CD8-positive, alpha-beta T cell (primary cell): ENCODE measurements at regions of chr11 and their contacts with region 1.

Region 1: DNA sequence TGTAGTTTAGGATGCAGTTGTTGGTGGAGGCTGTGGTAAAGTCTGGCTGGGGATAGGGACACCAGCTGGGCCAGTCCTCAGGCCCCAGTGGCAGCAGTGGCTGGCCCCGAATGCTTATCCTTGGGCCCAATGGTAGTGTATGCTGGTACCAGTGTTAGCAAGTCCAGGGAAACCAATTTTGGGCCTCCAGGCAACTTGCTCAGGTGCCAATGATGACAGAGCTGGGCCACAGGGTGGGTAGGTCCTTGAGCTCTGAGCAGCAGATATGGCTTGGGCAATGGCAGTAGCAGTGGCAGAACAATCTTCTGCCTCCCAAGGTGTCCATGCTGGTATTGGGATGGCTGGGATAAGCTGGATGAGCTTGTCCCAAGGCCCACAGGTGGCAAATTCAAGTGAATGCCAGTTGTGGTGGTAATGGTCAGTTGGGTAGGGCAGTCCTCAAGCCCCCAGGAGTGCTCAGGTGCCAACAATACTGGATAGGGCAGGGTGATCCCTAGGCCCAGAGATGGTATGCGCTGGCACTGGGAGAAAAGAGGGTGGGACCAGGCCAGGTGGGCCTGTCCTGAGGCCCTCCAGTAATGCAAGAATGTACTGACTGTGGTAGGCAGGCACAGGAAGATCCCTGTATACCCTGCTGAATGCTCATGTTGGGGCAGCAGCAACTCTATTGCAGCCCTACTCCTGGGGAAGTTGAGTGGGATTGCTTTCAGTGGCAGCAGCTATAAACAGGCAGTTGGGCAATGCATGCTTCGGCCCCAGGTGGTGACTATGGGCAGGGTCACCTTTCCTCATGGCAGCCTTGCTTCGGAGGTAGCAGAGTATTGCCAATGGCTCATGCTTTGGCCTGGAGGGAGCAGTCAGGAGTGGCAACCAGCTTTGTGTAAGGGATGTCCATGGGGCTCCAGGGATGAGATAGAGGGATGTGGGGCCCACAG is 54.7 kb downstream of the KCNQ1OT1 start:
- DNase-seq: no peak
- ATAC-seq: no peak
- H3K4me3 ChIP-seq: no peak overlapping the region
- H3K4me3 Mint-ChIP-seq: no peak overlapping the region
- H3K27ac ChIP-seq: no peak overlapping the region
- H3K27ac Mint-ChIP-seq: no peak overlapping the region
- H3K4me1 ChIP-seq: no peaks in the 10 kb centered on the region
- H3K4me1 Mint-ChIP-seq: no peaks in the 10 kb centered on the region
- H3K27me3 ChIP-seq: no peaks in the 10 kb centered on the region
- H3K27me3 Mint-ChIP-seq: no peaks in the 10 kb centered on the region
- CTCF ChIP-seq: no peak

Region 2: DNA sequence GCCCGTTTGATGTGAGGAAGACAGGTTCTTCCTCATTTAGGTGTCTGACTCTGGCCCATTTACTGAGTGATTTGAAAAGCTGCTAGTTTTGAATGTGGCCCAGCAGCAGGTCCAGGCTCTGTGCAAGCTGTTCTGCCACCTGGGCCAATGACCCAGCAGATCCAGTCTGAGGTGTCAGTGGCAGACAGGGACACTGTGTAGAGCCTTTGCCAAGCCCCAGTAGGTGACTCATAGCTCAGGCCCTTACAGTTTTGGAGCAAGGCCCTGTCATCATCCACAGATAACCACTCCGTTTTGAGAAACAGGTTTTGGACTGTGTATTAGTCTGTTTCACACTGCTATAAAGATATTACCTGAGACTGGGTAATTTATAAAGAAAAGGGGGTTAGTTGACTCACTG is 319.4 kb before region 1 on chr11:
- CTCF ChIA-PET with region 1: no interaction called
- POLR2A ChIA-PET with region 1: no interaction called
- intact Hi-C with region 1: no loop called
- DNase-seq: no peak
- ATAC-seq: no peak
- H3K4me3 ChIP-seq: no peak overlapping the region
- H3K4me3 Mint-ChIP-seq: no peak overlapping the region
- H3K27ac ChIP-seq: no peak overlapping the region
- H3K27ac Mint-ChIP-seq: no peak overlapping the region
- H3K4me1 ChIP-seq: no peaks in the 10 kb centered on the region
- H3K4me1 Mint-ChIP-seq: peaks cover 11% of the 10 kb centered on the region
- H3K27me3 ChIP-seq: peaks cover 0 to 3% of the 10 kb centered on the region in 2 experiments
- H3K27me3 Mint-ChIP-seq: peaks cover 19% of the 10 kb centered on the region
- CTCF ChIP-seq: no peak

Region 3: DNA sequence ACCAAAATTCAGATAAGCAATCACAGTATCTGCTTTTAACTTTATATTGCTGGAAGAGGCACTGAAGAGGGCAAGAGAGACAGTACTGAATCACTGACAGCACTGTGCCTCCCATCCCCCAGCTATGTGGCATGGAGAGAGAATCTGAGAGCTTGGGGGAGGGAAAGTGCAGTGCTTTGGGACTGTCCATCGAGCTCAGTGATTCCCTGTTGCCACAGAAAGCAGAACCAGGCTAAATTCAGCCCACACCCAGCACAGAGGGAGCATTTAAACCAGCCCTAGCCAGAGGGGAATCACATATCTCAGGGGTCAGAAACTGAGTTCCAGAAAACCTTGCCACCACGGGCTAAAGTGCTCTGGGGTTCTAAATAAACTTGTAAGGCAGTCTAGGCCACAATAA is 156.0 kb before region 1 on chr11:
- CTCF ChIA-PET with region 1: no interaction called
- POLR2A ChIA-PET with region 1: no interaction called
- intact Hi-C with region 1: no loop called
- DNase-seq: no peak
- ATAC-seq: no peak
- H3K4me3 ChIP-seq: no peak overlapping the region
- H3K4me3 Mint-ChIP-seq: no peak overlapping the region
- H3K27ac ChIP-seq: no peak overlapping the region
- H3K27ac Mint-ChIP-seq: no peak overlapping the region
- H3K4me1 ChIP-seq: no peaks in the 10 kb centered on the region
- H3K4me1 Mint-ChIP-seq: no peaks in the 10 kb centered on the region
- H3K27me3 ChIP-seq: peaks cover 0 to 3% of the 10 kb centered on the region in 2 experiments
- H3K27me3 Mint-ChIP-seq: peaks cover 2% of the 10 kb centered on the region
- CTCF ChIP-seq: no peak

Region 4: DNA sequence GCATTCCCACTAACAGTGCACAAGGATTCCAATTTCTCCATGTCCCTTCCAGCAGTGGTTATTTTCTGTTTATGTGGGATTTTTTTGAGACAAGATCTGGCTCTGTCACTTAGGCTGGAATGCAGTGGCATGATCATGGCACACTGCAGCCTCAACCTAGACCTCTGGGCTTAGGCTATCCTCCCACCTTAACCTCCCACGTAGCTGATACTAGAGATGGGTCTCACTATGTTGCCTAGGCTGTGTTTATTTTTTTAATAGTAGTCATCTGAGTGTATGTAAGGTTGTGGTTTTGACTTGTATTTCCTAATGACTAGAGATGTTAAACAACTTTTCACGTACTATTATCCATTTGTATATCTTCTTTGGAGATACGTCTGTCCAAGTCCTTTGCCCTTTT is 19.9 kb before region 1 on chr11:
- CTCF ChIA-PET with region 1: no interaction called
- POLR2A ChIA-PET with region 1: no interaction called
- intact Hi-C with region 1: loop called in 1 of 2 experiments (anchors 1 kb)
- DNase-seq: no peak
- ATAC-seq: no peak
- H3K4me3 ChIP-seq: no peak overlapping the region
- H3K4me3 Mint-ChIP-seq: no peak overlapping the region
- H3K27ac ChIP-seq: no peak overlapping the region
- H3K27ac Mint-ChIP-seq: no peak overlapping the region
- H3K4me1 ChIP-seq: no peaks in the 10 kb centered on the region
- H3K4me1 Mint-ChIP-seq: no peaks in the 10 kb centered on the region
- H3K27me3 ChIP-seq: no peaks in the 10 kb centered on the region
- H3K27me3 Mint-ChIP-seq: no peaks in the 10 kb centered on the region
- CTCF ChIP-seq: no peak

Region 5: GRCh38 chr11:2741377-2742131 is 96.4 kb after region 1 on chr11:
- CTCF ChIA-PET with region 1: no interaction called
- POLR2A ChIA-PET with region 1: no interaction called
- intact Hi-C with region 1: loop called in 1 of 2 experiments (anchors 10 kb)
- DNase-seq: no peak
- ATAC-seq: no peak
- H3K4me3 ChIP-seq: no peak overlapping the region
- H3K4me3 Mint-ChIP-seq: no peak overlapping the region
- H3K27ac ChIP-seq: no peak overlapping the region
- H3K27ac Mint-ChIP-seq: no peak overlapping the region
- H3K4me1 ChIP-seq: no peaks in the 10 kb centered on the region
- H3K4me1 Mint-ChIP-seq: no peaks in the 10 kb centered on the region
- H3K27me3 ChIP-seq: no peaks in the 10 kb centered on the region
- H3K27me3 Mint-ChIP-seq: no peaks in the 10 kb centered on the region
- CTCF ChIP-seq: no peak

Region 6: GRCh38 chr11:3164979-3165814 is 520.1 kb after region 1 on chr11 and contains the start of gene OSBPL5:
- CTCF ChIA-PET with region 1: no interaction called
- POLR2A ChIA-PET with region 1: no interaction called
- intact Hi-C with region 1: no loop called
- DNase-seq: peak in 8 of 9 experiments; percentile 33 to 79 (median 59)
- ATAC-seq: peak; percentile 70
- H3K4me3 ChIP-seq: peak within 1 kb of the TSS; percentile 54 to 79
- H3K4me3 Mint-ChIP-seq: peak within 1 kb of the TSS; percentile 84
- H3K27ac ChIP-seq: peak within 1 kb of the TSS in 1 of 2 experiments; percentile 59
- H3K27ac Mint-ChIP-seq: no peak within 1 kb of the TSS
- H3K4me1 ChIP-seq: peaks cover 52% of the 10 kb centered on the region
- H3K4me1 Mint-ChIP-seq: peaks cover 41% of the 10 kb centered on the region
- H3K27me3 ChIP-seq: peaks cover 0 to 2% of the 10 kb centered on the region in 2 experiments
- H3K27me3 Mint-ChIP-seq: peaks cover 8% of the 10 kb centered on the region
- CTCF ChIP-seq: no peak
- total RNA-seq, gene OSBPL5: 7.7 to 9.4 TPM